Activated CD4-positive, alpha-beta T cell treated with anti-CD3 and anti-CD28 coated beads, Interleukin-2, amount 10 ng/mL, durations not matched to agents 24 days and 14 days (primary cell): ENCODE measurements at regions of chr4 and their contacts with region 1.

Region 1: DNA sequence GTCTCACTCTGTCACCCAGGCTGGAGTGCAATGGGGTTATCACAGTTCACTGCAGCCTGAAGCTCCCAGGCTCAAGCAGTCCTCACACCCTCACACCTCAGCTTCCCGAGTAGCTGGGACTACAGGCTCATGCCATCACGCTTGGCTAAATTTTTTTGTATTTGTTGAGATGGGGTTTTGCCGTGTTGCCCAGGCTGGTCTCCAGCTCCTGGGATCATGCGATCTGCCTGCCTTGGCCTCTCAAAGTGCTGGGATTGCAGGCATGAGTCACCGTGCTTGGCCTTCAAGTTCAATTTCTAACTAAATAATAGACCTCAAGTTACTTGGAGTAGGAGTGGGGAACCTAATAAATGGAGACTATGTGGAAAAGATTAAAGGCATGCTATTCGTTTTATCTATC is 48.9 kb downstream of the MND1 start:
- DNase-seq: no peak
- H3K4me3 Mint-ChIP-seq: no peak overlapping the region
- H3K27ac Mint-ChIP-seq: no peak overlapping the region
- H3K4me1 Mint-ChIP-seq: peaks cover 4% of the 10 kb centered on the region
- H3K27me3 Mint-ChIP-seq: no peaks in the 10 kb centered on the region

Region 2: GRCh38 chr4:153260553-153261300 is 132.7 kb before region 1 on chr4:
- intact Hi-C with region 1: no loop called
- DNase-seq: no peak
- H3K4me3 Mint-ChIP-seq: no peak overlapping the region
- H3K27ac Mint-ChIP-seq: no peak overlapping the region
- H3K4me1 Mint-ChIP-seq: no peaks in the 10 kb centered on the region
- H3K27me3 Mint-ChIP-seq: peaks cover 19% of the 10 kb centered on the region

Region 3: DNA sequence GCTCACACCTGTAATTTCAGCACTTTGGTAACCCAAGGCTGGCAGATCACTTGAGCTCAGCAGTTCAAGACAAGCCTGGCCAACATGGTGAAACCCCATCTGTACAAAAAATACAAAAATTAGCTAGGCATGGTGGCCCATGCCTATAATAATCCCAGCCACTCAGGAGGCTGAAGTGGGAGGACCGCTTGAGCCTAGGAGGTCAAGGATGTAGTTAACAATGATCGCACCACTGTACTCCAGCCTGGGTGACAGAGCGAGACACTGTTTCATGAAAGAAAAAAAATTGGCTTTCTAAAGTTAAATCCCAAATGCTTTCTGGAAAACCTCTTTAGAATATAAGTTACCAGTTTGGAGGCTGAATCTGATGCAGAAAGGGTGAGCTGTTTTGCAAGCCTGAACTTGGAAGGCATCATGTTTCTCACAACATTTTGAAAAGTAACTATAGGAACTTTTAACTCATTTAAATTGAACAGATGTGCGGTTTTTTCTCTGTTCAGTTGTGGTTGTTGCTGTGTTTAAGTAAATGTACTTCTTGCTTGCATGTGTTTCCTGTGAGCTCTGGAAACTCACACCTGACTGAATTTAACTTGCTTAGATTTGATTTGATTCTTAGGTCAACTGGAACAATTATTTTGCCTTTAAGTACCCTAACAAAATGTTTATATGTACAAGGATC is 32.9 kb after region 1 on chr4:
- intact Hi-C with region 1: loop called (anchors 5 kb)
- DNase-seq: peak; percentile 78
- H3K4me3 Mint-ChIP-seq: peak overlapping the region; percentile 32
- H3K27ac Mint-ChIP-seq: peak overlapping the region; percentile 70
- H3K4me1 Mint-ChIP-seq: peaks cover 43% of the 10 kb centered on the region
- H3K27me3 Mint-ChIP-seq: no peaks in the 10 kb centered on the region